MCF 10A (cell line): ENCODE measurements at regions of chr1 and their contacts with region 1.

Region 1: GRCh38 chr1:212994926-212995325 is 20.7 kb downstream of the ANGEL2 start:
- DNase-seq: no peak
- H3K4me3 Mint-ChIP-seq: no peak overlapping the region
- H3K27ac Mint-ChIP-seq: no peak overlapping the region
- H3K4me1 Mint-ChIP-seq: no peaks in the 10 kb centered on the region
- H3K27me3 Mint-ChIP-seq: no peaks in the 10 kb centered on the region
- CTCF ChIP-seq: no peak

Region 2: DNA sequence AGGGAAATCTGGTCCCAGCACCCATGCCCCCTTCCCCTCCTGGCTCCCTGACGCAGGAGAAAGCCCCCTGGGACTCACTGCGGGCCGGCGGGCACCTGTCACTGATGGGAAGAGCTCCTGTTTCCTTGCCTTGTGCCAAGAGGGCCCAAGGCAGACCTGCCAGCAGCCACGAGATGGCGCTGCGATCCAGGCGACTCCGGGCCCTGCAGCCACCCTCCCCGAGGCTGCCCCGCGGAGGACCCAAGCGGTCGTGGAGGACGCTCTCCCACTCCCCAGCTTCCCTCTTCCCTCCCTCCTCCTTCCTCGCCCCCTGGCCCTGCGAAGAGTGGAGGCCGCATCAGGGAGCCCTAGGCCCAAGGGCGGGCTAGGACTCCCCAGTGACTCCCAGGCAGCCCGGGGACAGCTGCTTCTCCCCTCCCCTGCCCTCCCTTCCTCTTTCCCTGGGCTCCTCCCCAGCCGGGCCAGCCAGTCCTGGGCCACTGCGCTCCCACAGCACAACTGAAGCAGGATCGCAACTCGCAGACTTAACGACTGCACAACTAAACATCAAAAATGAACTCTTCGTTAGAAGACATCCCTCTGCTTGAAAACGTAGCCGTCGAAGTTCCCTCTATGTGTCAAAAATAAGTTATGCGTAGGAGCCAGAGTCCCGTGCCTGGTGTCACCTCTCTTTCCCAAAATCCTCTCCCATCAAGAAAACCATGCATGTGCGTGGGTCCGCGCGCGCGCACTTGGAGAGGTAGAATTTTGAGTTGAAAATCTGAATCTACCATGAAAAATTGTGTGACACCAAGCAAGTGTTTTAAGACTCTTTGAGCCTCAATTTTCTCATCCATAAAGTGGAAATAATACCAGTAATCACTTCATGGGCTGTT is 329.4 kb before region 1 on chr1:
- CTCF ChIA-PET with region 1: no interaction called
- POLR2A ChIA-PET with region 1: no interaction called
- intact Hi-C with region 1: loop called (anchors 2 kb)
- DNase-seq: peak; percentile 56
- H3K4me3 Mint-ChIP-seq: no peak overlapping the region
- H3K27ac Mint-ChIP-seq: peak overlapping the region; percentile 62
- H3K4me1 Mint-ChIP-seq: peaks cover 16% of the 10 kb centered on the region
- H3K27me3 Mint-ChIP-seq: peaks cover 21% of the 10 kb centered on the region
- CTCF ChIP-seq: peak; percentile 75

Region 3: GRCh38 chr1:212791676-212792395 is 203.1 kb before region 1 on chr1 and contains the starts of genes NSL1 and TATDN3:
- CTCF ChIA-PET with region 1: interaction called, 44 read pairs
- POLR2A ChIA-PET with region 1: interaction called, 19 read pairs
- intact Hi-C with region 1: loop called (anchors 2 kb)
- DNase-seq: peak; percentile 98
- H3K4me3 Mint-ChIP-seq: peak within 1 kb of the TSS; percentile 83
- H3K27ac Mint-ChIP-seq: peak within 1 kb of the TSS; percentile 90
- H3K4me1 Mint-ChIP-seq: peaks cover 19% of the 10 kb centered on the region
- H3K27me3 Mint-ChIP-seq: no peaks in the 10 kb centered on the region
- CTCF ChIP-seq: no peak
- total RNA-seq, gene NSL1: 39.7 and 42.2 TPM in 2 replicates
- total RNA-seq, gene TATDN3: 31.5 and 35.7 TPM in 2 replicates

Region 4: GRCh38 chr1:212857992-212858460 is 136.9 kb before region 1 on chr1 and contains the start of gene FLVCR1:
- CTCF ChIA-PET with region 1: interaction called, 15 read pairs
- POLR2A ChIA-PET with region 1: interaction called, 22 read pairs
- intact Hi-C with region 1: loop called (anchors 1 kb)
- DNase-seq: peak; percentile 100
- H3K4me3 Mint-ChIP-seq: no peak within 1 kb of the TSS
- H3K27ac Mint-ChIP-seq: peak within 1 kb of the TSS; percentile 99
- H3K4me1 Mint-ChIP-seq: peaks cover 11% of the 10 kb centered on the region
- H3K27me3 Mint-ChIP-seq: no peaks in the 10 kb centered on the region
- CTCF ChIP-seq: no peak
- total RNA-seq, gene FLVCR1: 16.5 and 17.9 TPM in 2 replicates

Region 5: DNA sequence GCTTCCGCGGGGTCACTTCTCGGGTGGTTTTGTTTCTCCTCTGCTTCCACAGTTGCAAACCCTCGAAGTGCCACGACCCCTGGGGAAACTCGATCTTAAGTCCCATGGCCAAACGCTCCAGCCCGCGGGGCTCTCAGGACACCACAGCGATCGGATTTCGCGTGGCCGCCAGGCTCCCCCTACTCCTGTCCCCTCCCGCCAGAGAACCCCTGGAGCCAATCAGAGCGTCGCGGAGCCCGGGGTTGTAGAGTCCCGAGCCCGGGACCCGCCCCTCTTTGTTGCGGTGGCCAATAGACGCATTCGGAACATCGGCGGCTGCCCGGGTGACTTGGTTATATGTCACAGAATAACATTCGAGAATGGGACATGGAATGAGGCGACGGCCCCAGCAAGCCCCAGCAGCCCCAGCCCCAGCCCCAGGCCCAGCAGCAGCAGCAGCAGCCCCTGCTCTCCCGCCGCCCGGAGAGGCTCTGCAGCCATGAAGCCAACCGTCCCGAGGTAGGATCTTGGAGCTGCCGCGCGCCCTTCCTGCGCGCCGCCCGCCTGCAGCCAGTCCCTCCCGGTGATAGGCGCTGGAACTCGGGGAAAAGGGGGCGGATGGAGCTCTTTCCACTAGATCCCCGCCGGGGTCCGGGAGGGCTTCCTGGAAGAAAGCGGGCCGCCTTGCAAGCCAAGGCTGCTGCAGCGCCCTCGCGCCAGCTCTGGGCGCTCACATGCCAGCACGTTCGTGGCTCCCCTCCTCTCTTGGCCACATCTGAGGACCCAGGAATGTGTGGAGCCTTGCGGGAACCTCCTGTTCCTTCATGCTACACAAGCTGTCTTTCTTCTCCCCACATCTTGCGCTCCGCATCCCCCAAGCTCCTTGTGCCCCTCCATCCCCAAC is 44.4 kb before region 1 on chr1 and contains the start of gene VASH2:
- CTCF ChIA-PET with region 1: interaction called, 6 read pairs
- POLR2A ChIA-PET with region 1: interaction called, 3 read pairs
- intact Hi-C with region 1: loop called (anchors 2 kb)
- DNase-seq: peak; percentile 94
- H3K4me3 Mint-ChIP-seq: peak within 1 kb of the TSS; percentile 85
- H3K27ac Mint-ChIP-seq: no peak within 1 kb of the TSS
- H3K4me1 Mint-ChIP-seq: no peaks in the 10 kb centered on the region
- H3K27me3 Mint-ChIP-seq: peaks cover 19% of the 10 kb centered on the region
- CTCF ChIP-seq: no peak
- total RNA-seq, gene VASH2: not detected in 2 replicates

Region 6: DNA sequence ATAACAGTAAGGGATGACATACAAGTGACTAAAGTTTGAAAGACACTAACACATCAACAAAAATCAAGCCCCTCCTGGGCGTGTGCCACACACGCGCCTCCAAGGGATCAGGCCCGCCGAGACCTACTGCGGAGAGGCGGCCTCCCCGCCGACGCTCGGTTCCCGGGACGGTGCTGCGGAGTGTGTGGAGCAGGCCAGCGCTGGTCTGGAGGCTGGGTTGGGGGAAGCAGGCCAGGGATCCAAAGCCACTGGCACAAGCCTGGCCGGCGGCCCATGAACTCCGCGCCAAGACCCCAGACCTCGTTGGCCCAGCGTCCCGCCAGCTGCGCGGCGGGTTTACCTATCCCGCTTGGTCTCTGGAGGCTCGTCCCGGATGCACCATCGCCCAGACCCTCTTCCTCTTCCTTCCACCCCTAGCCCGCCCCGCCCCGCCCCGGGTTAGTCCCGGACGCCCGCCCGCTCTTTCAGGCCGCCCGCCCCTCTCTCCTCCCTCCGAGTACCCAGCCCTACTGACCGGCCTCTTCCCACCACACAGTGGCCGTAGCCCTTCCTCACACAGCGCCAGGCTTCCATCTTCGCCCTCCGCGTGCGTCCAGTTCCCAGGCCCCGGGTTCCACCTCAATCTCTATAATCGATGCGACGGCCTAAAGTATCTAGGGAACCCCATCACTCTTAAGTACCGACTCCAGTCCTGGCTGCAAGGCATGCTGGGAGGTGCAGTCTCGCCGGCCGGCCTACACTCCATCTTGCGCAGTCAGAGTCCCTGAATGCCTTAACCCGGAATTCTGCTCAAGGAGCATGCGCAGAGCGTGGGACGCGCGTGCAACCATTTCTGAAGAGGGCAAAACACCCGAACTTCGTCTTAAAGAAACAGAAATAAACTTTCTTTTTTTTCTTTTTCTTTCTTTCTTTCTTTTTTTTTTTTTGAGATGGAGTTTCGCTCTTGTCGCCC is 20.4 kb after region 1 on chr1 and contains the start of gene ANGEL2:
- CTCF ChIA-PET with region 1: interaction called, 9 read pairs
- POLR2A ChIA-PET with region 1: interaction called, 15 read pairs
- intact Hi-C with region 1: no loop called
- DNase-seq: peak; percentile 100
- H3K4me3 Mint-ChIP-seq: peak within 1 kb of the TSS; percentile 91
- H3K27ac Mint-ChIP-seq: peak within 1 kb of the TSS; percentile 84
- H3K4me1 Mint-ChIP-seq: peaks cover 13% of the 10 kb centered on the region
- H3K27me3 Mint-ChIP-seq: no peaks in the 10 kb centered on the region
- CTCF ChIP-seq: no peak
- total RNA-seq, gene ANGEL2: 87.1 and 89.7 TPM in 2 replicates

Region 7: DNA sequence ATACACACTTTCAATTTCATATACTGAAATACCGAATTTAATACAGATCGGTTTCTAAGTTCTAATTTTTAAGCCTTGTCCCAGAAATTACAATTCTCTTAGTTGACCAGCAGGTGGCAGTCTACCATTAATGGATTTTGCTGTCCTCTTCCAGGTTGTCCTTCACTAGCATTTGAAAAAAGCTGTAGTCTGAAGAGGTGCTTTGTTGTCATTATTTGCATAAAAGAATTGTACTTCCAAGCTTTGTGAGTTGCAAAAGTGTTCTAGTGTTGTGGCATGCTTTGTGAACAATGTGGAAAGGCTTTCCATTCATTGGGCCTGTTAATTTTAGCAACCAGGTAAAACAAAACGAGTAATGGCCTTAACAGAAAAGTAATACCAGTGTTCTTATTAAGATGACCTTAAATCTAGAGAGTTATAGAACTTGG is 249.8 kb after region 1 on chr1:
- CTCF ChIA-PET with region 1: no interaction called
- POLR2A ChIA-PET with region 1: no interaction called
- intact Hi-C with region 1: no loop called
- DNase-seq: peak; percentile 88
- H3K4me3 Mint-ChIP-seq: no peak overlapping the region
- H3K27ac Mint-ChIP-seq: peak overlapping the region; percentile 17
- H3K4me1 Mint-ChIP-seq: no peaks in the 10 kb centered on the region
- H3K27me3 Mint-ChIP-seq: no peaks in the 10 kb centered on the region
- CTCF ChIP-seq: peak; percentile 97